ENCODE measurements at regions of chr1 and their contacts with region 1.

Region 1: GRCh38 chr1:210584439-210585113 is 255.9 kb downstream of the HHAT start:
- DNase-seq: peak; percentile 97
- H3K4me3 Mint-ChIP-seq: no peak overlapping the region
- H3K27ac Mint-ChIP-seq: no peak overlapping the region
- H3K4me1 Mint-ChIP-seq: peaks cover 6% of the 10 kb centered on the region
- H3K27me3 Mint-ChIP-seq: no peaks in the 10 kb centered on the region
- CTCF ChIP-seq: peak; percentile 100

Region 2: DNA sequence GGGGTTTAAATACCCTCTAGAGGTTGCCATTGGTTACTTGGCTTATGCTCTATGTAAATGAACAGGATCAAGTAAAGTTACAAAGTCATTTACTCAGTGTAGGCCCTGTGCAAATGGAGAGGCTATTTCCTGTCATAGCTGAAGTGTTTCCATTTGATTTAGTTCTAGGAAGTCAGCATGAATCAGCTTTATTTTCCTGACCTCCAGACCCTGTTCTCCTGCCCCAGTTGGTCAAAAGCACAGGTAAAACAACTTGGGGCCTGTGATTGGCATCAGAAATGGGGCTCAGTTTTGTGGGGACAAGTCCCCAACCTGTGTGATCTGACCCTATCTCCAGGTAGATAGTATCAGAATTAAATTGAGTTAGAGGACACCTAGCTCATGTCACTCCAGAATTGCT is 15.9 kb before region 1 on chr1:
- CTCF ChIA-PET with region 1: interaction called, 15 read pairs
- POLR2A ChIA-PET with region 1: no interaction called
- intact Hi-C with region 1: no loop called
- DNase-seq: no peak
- H3K4me3 Mint-ChIP-seq: no peak overlapping the region
- H3K27ac Mint-ChIP-seq: no peak overlapping the region
- H3K4me1 Mint-ChIP-seq: no peaks in the 10 kb centered on the region
- H3K27me3 Mint-ChIP-seq: peaks cover 24% of the 10 kb centered on the region
- CTCF ChIP-seq: no peak

Region 3: DNA sequence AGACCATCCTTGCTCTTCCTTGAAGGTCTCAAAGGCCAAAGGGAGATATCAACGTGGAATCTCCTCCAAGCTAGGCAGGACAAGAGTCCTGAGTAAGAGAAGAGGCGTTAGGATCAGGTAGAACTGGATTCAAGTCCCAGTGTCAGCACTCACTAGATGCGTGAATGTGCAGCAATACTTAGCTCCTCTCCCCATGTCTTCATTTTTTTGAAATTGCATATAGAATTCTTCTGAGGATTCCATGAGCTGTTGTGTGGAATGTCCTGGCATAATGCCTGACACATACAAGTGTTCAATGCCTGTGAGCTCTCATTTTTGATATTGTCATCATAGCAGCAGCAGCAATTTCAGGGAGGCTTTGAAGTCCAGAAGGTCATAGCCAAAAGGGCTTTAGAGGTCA is 216.2 kb after region 1 on chr1:
- CTCF ChIA-PET with region 1: interaction called, 5 read pairs
- POLR2A ChIA-PET with region 1: no interaction called
- intact Hi-C with region 1: loop called (anchors 10 kb)
- DNase-seq: no peak
- H3K4me3 Mint-ChIP-seq: no peak overlapping the region
- H3K27ac Mint-ChIP-seq: no peak overlapping the region
- H3K4me1 Mint-ChIP-seq: no peaks in the 10 kb centered on the region
- H3K27me3 Mint-ChIP-seq: peaks cover 54% of the 10 kb centered on the region
- CTCF ChIP-seq: no peak

Region 4: GRCh38 chr1:211037095-211037494 is 452.5 kb after region 1 on chr1:
- CTCF ChIA-PET with region 1: no interaction called
- POLR2A ChIA-PET with region 1: no interaction called
- intact Hi-C with region 1: no loop called
- DNase-seq: peak; percentile 99
- H3K4me3 Mint-ChIP-seq: no peak overlapping the region
- H3K27ac Mint-ChIP-seq: peak overlapping the region; percentile 56
- H3K4me1 Mint-ChIP-seq: peaks cover 19% of the 10 kb centered on the region
- H3K27me3 Mint-ChIP-seq: no peaks in the 10 kb centered on the region
- CTCF ChIP-seq: no peak

Region 5: GRCh38 chr1:211118407-211119102 is 534.0 kb after region 1 on chr1:
- CTCF ChIA-PET with region 1: interaction called, 10 read pairs
- POLR2A ChIA-PET with region 1: no interaction called
- intact Hi-C with region 1: no loop called
- DNase-seq: peak; percentile 60
- H3K4me3 Mint-ChIP-seq: no peak overlapping the region
- H3K27ac Mint-ChIP-seq: no peak overlapping the region
- H3K4me1 Mint-ChIP-seq: peaks cover 12% of the 10 kb centered on the region
- H3K27me3 Mint-ChIP-seq: peaks cover 9% of the 10 kb centered on the region
- CTCF ChIP-seq: no peak

Region 6: DNA sequence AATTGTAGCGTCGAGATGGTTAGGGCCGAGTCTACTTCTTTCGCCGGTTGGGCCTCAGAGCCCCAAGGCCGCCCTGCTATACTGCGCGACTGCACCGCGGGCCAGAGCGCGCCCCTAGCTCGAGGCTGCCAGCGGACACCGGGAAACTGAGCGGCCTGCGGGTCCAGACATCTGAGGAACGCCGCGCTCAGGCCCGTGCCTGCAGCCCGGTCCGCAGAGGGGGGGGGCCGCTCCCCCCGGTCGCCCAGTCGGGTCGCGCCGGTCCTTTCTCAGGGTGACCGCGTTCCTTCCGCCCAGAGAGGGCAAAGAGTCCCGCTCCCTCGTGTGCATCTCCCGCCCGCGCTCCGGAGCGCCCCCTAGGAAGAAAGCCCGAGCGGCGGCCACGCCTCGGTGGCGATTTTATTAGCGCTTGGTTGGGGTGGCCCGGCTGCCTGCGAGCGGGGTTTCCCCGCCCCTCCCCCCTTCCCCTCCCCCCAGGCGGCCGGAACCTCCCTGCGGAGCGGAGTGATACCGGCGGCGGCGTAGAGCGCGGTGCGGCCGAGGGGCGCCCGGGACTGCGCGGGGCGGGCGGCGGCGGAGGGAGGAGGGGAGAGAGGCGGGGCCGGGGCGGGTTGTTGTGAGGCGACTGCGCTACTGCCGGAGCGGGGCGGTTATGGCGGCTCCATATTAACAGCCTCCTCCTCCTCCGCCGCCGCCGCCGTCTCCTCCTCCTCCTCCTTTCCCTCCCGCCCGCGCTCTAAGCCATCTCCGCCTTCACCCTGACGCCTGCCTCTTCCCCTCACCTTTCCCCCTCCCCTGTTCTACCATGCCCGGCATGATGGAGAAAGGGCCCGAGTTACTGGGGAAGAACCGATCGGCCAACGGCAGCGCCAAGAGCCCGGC is 674.4 kb after region 1 on chr1 and contains the start of gene RCOR3:
- CTCF ChIA-PET with region 1: no interaction called
- POLR2A ChIA-PET with region 1: no interaction called
- intact Hi-C with region 1: loop called (anchors 5 kb)
- DNase-seq: peak; percentile 96
- H3K4me3 Mint-ChIP-seq: peak within 1 kb of the TSS; percentile 88
- H3K27ac Mint-ChIP-seq: peak within 1 kb of the TSS; percentile 96
- H3K4me1 Mint-ChIP-seq: peaks cover 24% of the 10 kb centered on the region
- H3K27me3 Mint-ChIP-seq: no peaks in the 10 kb centered on the region
- CTCF ChIP-seq: peak; percentile 93
- total RNA-seq, gene RCOR3: 70.1 and 70.3 TPM in 2 replicates

Measured in MCF 10A (cell line).